PC-3 (cell line): ENCODE measurements at regions of chr7 and their contacts with region 1.

Region 1: GRCh38 chr7:46707973-46708372 is 786.9 kb upstream of the IGFBP3 start:
- DNase-seq: no peak
- ATAC-seq: no peak
- H3K4me3 ChIP-seq: no peak overlapping the region
- H3K27ac ChIP-seq: no peak overlapping the region
- H3K4me1 ChIP-seq: peaks cover 10% of the 10 kb centered on the region; the same call in 1 of the 2 replicates
- H3K27me3 ChIP-seq: no peaks in the 10 kb centered on the region
- CTCF ChIP-seq: no peak

Region 2: GRCh38 chr7:46672861-46673260 is 35.1 kb before region 1 on chr7:
- CTCF ChIA-PET with region 1: no interaction called
- POLR2A ChIA-PET with region 1: no interaction called
- intact Hi-C with region 1: loop called (anchors 1 kb)
- DNase-seq: no peak
- ATAC-seq: no peak
- H3K4me3 ChIP-seq: no peak overlapping the region
- H3K27ac ChIP-seq: no peak overlapping the region
- H3K4me1 ChIP-seq: no peaks in the 10 kb centered on the region
- H3K27me3 ChIP-seq: no peaks in the 10 kb centered on the region
- CTCF ChIP-seq: no peak

Region 3: DNA sequence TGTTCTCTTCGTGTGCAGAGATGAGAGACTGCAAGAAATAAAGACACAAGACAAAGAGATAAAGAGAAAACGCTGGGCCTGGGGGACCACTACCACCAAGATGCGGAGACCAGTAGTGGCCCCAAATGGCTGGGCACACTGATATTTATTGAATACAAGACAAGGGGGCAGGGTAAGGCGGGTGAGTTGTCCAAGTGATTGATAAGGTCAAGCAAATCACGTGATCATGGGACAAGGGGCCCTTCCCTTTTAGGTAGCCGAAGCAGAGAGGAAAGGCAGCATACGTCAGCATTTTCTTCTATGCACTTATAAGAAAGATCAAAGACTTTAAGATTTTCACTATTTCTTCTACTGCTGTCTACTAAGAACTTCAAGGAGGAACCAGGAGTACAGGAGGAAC is 111.8 kb after region 1 on chr7:
- CTCF ChIA-PET with region 1: no interaction called
- POLR2A ChIA-PET with region 1: no interaction called
- intact Hi-C with region 1: no loop called
- DNase-seq: no peak
- ATAC-seq: no peak
- H3K4me3 ChIP-seq: no peak overlapping the region
- H3K27ac ChIP-seq: no peak overlapping the region
- H3K4me1 ChIP-seq: peaks cover 18% of the 10 kb centered on the region
- H3K27me3 ChIP-seq: no peaks in the 10 kb centered on the region
- CTCF ChIP-seq: no peak

Region 4: DNA sequence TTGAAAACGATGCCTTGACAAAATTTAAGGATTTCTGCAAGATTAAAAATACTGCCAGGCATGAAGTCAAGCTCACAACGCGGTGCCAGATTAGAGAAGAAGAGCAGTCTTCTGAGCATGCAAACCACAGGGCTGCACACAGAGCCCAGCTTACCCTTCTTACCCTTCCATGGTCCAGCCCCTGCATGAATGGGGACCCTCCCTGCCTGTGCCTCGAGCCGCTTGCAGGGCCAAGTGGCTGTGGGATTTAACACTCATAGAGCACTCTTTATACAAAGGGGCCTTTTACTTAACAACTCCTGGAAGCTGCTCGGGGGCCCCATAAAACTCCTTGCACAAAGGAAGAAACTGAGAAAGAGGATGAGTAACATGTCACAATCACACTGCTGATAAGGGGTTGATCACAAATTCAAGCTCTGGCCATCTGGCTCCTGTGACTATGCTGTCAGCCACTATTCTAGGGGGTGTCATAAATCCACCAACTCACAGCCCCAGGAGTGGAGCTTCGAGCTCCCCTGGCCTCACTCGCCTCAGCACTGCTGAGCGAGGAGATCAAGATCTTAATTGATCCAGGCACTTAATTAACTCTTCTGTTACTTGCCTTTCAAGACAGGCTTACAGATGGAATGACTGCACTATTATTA is 359.1 kb after region 1 on chr7:
- CTCF ChIA-PET with region 1: no interaction called
- POLR2A ChIA-PET with region 1: no interaction called
- intact Hi-C with region 1: no loop called
- DNase-seq: no peak
- ATAC-seq: no peak
- H3K4me3 ChIP-seq: no peak overlapping the region
- H3K27ac ChIP-seq: no peak overlapping the region
- H3K4me1 ChIP-seq: no peaks in the 10 kb centered on the region
- H3K27me3 ChIP-seq: no peaks in the 10 kb centered on the region
- CTCF ChIP-seq: no peak